Panc1 (cell line): ENCODE measurements at regions of chr7 and their contacts with region 1.

Region 1: GRCh38 chr7:151665368-151665767 is 145.7 kb upstream of the RHEB start:
- DNase-seq: no peak
- ATAC-seq: no peak
- H3K4me3 ChIP-seq: no peak overlapping the region
- H3K27ac ChIP-seq: no peak overlapping the region
- H3K4me1 ChIP-seq: no peaks in the 10 kb centered on the region
- H3K27me3 ChIP-seq: no peaks in the 10 kb centered on the region
- CTCF ChIP-seq: no peak

Region 2: GRCh38 chr7:151641587-151641986 is 23.8 kb before region 1 on chr7:
- CTCF ChIA-PET with region 1: no interaction called
- POLR2A ChIA-PET with region 1: interaction called, 16 read pairs
- in situ Hi-C with region 1: no loop called
- intact Hi-C with region 1: no loop called
- DNase-seq: no peak
- ATAC-seq: no peak
- H3K4me3 ChIP-seq: no peak overlapping the region
- H3K27ac ChIP-seq: no peak overlapping the region
- H3K4me1 ChIP-seq: 0 out of 2 replicates have a peak, but pooled peaks cover 5% of the 10 kb centered on the region
- H3K27me3 ChIP-seq: no peaks in the 10 kb centered on the region
- CTCF ChIP-seq: no peak